Left ventricle myocardium inferior (tissue), 1 donor: ENCODE measurements at regions of chrX and their contacts with region 1.

Region 1: DNA sequence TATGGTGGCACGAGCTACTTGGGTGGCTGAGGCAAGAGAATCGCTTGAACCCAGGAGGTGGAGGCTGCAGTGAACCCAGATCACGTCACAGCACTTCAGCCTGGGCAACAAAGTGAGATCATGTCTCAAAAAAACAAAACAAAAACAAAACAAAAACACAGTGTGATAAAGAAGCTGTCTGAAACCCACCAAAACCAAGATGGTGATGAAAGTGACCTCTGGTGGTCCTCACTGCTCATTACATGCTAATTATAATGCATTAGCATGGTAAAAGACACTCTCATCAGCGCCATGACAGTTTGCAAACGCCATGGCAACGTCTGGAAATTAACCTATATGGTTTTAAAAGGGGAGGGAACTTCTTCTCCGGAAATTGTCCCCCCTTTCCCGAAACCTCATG is 29.4 kb upstream of the OPHN1 start:
- DNase-seq: no peak
- H3K4me3 ChIP-seq: no peak overlapping the region
- H3K27ac ChIP-seq: no peak overlapping the region
- H3K4me1 ChIP-seq: no peaks in the 10 kb centered on the region
- H3K27me3 ChIP-seq: no peaks in the 10 kb centered on the region
- CTCF ChIP-seq: peak; percentile 66

Region 2: GRCh38 chrX:68196939-68197791 is 265.5 kb before region 1 on chrX:
- intact Hi-C with region 1: loop called (anchors 5 kb)
- DNase-seq: no peak
- H3K4me3 ChIP-seq: no peak overlapping the region
- H3K27ac ChIP-seq: no peak overlapping the region
- H3K4me1 ChIP-seq: no peaks in the 10 kb centered on the region
- H3K27me3 ChIP-seq: no peaks in the 10 kb centered on the region
- CTCF ChIP-seq: peak; percentile 70

Region 3: DNA sequence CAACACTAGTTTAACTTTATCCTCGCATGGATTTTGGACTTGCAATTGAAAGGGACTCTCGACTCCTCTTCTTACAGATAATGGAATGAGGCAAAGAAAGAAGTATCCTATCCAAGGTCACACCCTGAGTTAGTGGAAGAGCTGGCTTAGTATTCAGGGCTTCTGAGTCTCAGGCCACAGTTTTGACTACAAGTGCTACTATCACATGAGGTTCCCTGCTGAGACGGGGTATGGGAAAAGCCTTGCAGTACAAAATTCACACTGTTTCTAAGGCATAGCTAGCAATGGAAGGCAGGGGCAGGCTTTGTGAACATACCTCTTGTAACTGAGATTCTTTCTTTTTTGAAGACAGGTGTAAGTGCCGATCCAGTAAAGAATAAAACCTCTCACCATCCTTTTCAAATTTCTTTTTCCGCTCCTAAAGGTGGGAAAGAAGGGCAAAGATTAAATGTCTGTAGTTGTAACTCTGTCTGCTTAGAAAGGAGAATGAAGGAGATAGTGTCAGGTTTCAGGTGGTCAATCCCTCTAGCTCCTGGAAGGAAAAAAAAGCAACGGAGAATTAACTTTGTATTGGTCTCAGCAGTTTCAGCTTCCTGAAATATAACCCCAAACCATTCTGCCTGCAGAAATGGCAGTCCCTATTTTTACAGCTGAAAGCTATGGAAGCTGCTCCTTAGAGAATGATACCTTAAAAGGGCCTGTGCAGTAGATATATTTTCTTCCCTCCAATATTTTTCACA is 228.3 kb before region 1 on chrX:
- intact Hi-C with region 1: no loop called
- DNase-seq: no peak
- H3K4me3 ChIP-seq: no peak overlapping the region
- H3K27ac ChIP-seq: no peak overlapping the region
- H3K4me1 ChIP-seq: no peaks in the 10 kb centered on the region
- H3K27me3 ChIP-seq: no peaks in the 10 kb centered on the region
- CTCF ChIP-seq: no peak

Region 4: DNA sequence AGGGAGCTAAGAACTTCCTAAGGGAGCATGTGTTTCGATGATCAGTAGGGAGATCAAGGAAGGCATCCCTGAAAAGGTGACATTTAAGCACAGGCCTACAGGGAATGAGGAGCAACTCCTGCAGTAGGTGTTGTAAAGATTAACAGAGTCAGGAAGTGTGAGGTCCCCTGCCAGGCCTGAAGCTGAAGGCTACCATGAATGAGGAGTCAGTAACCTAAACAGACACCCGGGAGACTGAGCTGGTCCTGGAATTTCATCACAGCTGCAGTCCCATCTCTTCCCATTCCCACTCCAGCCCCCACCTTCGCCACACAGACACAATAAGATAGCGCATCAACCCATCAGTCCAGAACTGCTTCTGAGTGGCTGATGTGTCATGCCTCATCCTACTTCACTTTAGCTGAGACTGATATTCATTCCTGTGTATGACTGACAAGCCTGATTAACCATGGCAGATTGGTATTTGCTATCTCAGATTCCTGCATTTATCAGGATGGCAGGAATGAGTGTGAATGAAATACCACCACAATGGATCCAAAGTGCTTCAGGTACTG is 339.2 kb after region 1 on chrX:
- intact Hi-C with region 1: no loop called
- DNase-seq: no peak
- H3K4me3 ChIP-seq: no peak overlapping the region
- H3K27ac ChIP-seq: no peak overlapping the region
- H3K4me1 ChIP-seq: no peaks in the 10 kb centered on the region
- H3K27me3 ChIP-seq: no peaks in the 10 kb centered on the region
- CTCF ChIP-seq: no peak